B cell (primary cell): ENCODE measurements at regions of chr1 and their contacts with region 1.

Region 1: DNA sequence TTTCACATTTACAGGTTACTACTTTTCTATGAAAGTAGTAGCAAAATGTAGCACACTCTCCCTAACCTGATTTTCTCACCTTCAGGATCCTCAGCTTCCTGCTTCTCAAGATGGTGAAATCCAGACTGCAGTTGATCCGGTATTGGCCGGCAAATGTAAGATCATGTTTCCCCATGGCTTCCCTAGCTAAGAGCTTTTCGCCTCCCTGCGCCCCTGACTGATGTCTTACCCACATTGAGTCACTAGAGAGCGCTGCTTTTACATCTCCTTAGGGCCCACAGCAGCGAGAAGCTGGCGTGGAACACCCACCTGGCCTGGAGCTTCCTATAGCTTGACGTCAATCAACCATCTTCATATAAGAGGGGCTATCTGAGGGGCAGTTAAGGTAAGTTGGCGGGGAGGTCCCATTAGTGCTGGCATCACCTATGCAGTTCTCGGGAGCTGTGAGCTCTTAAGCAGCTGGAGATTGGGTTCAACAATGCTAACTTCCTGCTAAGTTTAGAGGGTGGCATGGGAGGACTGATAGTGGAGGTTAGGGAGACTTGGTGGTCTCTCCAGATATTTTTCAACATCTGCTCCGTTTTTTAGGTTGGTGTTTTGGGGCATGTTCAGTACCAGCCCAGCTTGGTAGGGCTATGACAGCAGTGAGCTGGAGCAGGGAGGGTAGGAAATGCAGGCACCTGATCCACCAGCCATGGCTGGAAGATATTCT is 5.5 kb downstream of the PTPN7 start:
- DNase-seq: peak; percentile 73
- ATAC-seq: peak; percentile 80
- H3K4me3 ChIP-seq: no peak overlapping the region
- H3K4me3 Mint-ChIP-seq: no peak overlapping the region
- H3K27ac ChIP-seq: peak overlapping the region in 1 of 2 donors; percentile 16
- H3K27ac Mint-ChIP-seq: no peak overlapping the region
- H3K4me1 ChIP-seq: peaks cover 15 to 22% of the 10 kb centered on the region in 2 donors
- H3K4me1 Mint-ChIP-seq: peaks cover 36% of the 10 kb centered on the region
- H3K27me3 ChIP-seq: no peaks in the 10 kb centered on the region
- H3K27me3 Mint-ChIP-seq: no peaks in the 10 kb centered on the region
- CTCF ChIP-seq: peak; percentile 76

Region 2: GRCh38 chr1:202135221-202135721 is 19.7 kb before region 1 on chr1:
- CTCF ChIA-PET with region 1: interaction called, 32 read pairs
- POLR2A ChIA-PET with region 1: no interaction called
- intact Hi-C with region 1: no loop called
- DNase-seq: peak; percentile 71
- ATAC-seq: peak; percentile 94
- H3K4me3 ChIP-seq: no peak overlapping the region
- H3K4me3 Mint-ChIP-seq: no peak overlapping the region
- H3K27ac ChIP-seq: no peak overlapping the region
- H3K27ac Mint-ChIP-seq: no peak overlapping the region
- H3K4me1 ChIP-seq: no peaks in the 10 kb centered on the region
- H3K4me1 Mint-ChIP-seq: peaks cover 14% of the 10 kb centered on the region
- H3K27me3 ChIP-seq: no peaks in the 10 kb centered on the region
- H3K27me3 Mint-ChIP-seq: no peaks in the 10 kb centered on the region
- CTCF ChIP-seq: peak; percentile 87

Region 3: GRCh38 chr1:202144402-202145067 is 10.4 kb before region 1 on chr1 and contains the start of gene ARL8A:
- CTCF ChIA-PET with region 1: interaction called, 23 read pairs
- POLR2A ChIA-PET with region 1: interaction called, 4 read pairs
- intact Hi-C with region 1: loop called (anchors 1 kb)
- DNase-seq: peak; percentile 78
- ATAC-seq: peak; percentile 74
- H3K4me3 ChIP-seq: peak within 1 kb of the TSS; percentile 74 to 92 (median 88)
- H3K4me3 Mint-ChIP-seq: peak within 1 kb of the TSS; percentile 93
- H3K27ac ChIP-seq: peak within 1 kb of the TSS; percentile 65 to 90
- H3K27ac Mint-ChIP-seq: peak within 1 kb of the TSS; percentile 95
- H3K4me1 ChIP-seq: peaks cover 30 to 43% of the 10 kb centered on the region in 2 donors
- H3K4me1 Mint-ChIP-seq: peaks cover 47% of the 10 kb centered on the region
- H3K27me3 ChIP-seq: no peaks in the 10 kb centered on the region
- H3K27me3 Mint-ChIP-seq: no peaks in the 10 kb centered on the region
- CTCF ChIP-seq: no peak
- total RNA-seq, gene ARL8A: 66.8 and 70.7 TPM in 2 replicates

Region 4: DNA sequence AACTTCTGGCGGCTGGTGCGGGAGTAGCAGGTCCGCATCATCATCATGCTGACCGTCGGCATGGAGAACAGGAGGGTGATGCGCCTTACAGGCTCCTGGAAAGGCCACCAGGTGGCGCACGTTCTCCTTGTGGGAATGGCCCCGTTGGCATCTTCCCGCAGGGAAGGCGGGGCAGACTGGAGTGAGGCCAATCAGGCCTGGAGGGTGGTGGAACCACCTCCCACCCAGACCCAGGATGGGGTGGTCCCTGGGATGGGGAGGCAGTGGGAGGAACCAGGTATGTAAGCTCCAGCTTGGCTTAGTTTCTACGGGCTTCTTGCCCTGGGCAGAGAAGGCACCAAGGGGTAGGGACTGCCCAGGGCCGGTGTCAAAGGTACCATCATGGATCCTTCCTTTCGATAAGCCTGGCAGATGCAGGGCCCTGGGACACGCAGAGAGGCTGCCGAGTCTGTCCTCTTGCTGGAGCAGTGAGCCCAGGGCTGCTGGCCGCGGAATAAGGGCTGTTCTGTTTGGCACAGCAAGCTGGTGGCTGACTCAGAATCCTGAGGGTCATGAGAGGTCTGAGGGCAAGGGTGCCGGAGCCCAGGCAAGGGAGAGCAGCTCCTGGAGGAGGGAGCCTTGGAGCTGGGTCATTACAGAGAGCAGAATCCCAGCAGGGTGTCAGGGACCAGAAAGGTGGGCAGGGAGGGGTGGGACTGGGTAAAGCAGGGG is 30.0 kb after region 1 on chr1:
- CTCF ChIA-PET with region 1: interaction called, 37 read pairs
- POLR2A ChIA-PET with region 1: no interaction called
- intact Hi-C with region 1: no loop called
- DNase-seq: peak; percentile 71
- ATAC-seq: peak; percentile 50
- H3K4me3 ChIP-seq: no peak overlapping the region
- H3K4me3 Mint-ChIP-seq: no peak overlapping the region
- H3K27ac ChIP-seq: no peak overlapping the region
- H3K27ac Mint-ChIP-seq: no peak overlapping the region
- H3K4me1 ChIP-seq: peaks cover 5 to 6% of the 10 kb centered on the region in 2 donors
- H3K4me1 Mint-ChIP-seq: peaks cover 9% of the 10 kb centered on the region
- H3K27me3 ChIP-seq: peaks cover 0 to 31% (median 5%) of the 10 kb centered on the region in 4 experiments
- H3K27me3 Mint-ChIP-seq: peaks cover 46% of the 10 kb centered on the region
- CTCF ChIP-seq: peak; percentile 78

Region 5: DNA sequence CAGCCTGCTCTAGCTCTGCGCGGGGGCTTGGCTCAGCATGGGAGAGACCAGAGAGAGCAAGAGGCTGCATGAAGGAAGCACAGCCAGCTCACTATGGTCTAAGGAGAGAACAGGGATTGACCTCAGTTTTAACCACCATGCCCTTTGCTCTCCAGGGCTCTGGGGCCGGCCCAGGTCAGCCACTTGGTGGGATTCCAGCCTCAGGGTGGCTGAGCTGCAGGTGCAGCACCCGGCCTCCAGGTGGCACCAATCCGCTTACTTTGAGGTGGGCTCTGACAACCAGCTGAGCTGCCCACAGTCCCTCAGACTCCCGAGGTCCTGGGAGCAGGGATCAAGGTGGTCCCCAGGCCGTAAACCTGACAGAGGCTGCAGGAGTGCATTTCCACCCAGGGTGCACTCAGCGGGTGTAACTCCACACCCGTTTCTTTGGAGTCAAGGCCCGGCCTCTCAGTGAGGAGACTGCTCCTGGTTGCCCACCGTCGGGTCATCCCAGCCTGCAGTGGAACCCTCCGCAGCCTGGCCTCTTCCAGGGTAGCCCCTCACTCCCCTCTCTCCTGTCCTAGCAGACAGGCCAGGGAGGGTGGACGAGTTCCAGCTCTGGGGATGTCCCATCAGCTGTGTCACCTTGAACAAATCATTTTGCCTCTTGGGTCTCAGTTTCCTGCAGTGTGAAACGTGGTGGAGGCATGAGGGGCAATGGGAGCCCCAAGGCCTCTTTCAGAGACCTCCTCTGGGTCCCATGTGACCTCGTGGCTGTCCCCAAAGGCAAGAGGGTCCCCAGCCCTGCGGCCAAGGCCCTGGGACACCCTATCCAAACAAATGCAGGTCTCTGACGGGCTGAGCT is 38.1 kb after region 1 on chr1:
- CTCF ChIA-PET with region 1: interaction called, 24 read pairs
- POLR2A ChIA-PET with region 1: no interaction called
- intact Hi-C with region 1: no loop called
- DNase-seq: peak; percentile 75
- ATAC-seq: peak; percentile 71
- H3K4me3 ChIP-seq: no peak overlapping the region
- H3K4me3 Mint-ChIP-seq: peak overlapping the region; percentile 58
- H3K27ac ChIP-seq: no peak overlapping the region
- H3K27ac Mint-ChIP-seq: no peak overlapping the region
- H3K4me1 ChIP-seq: peaks cover 14 to 19% of the 10 kb centered on the region in 2 donors
- H3K4me1 Mint-ChIP-seq: peaks cover 18% of the 10 kb centered on the region
- H3K27me3 ChIP-seq: peaks cover 0 to 36% (median 10%) of the 10 kb centered on the region in 4 experiments
- H3K27me3 Mint-ChIP-seq: peaks cover 54% of the 10 kb centered on the region
- CTCF ChIP-seq: peak; percentile 89

Region 6: GRCh38 chr1:202315576-202316168 is 160.8 kb after region 1 on chr1:
- CTCF ChIA-PET with region 1: interaction called, 37 read pairs
- POLR2A ChIA-PET with region 1: no interaction called
- intact Hi-C with region 1: loop called (anchors 1 kb)
- DNase-seq: peak; percentile 72
- ATAC-seq: peak; percentile 86
- H3K4me3 ChIP-seq: no peak overlapping the region
- H3K4me3 Mint-ChIP-seq: no peak overlapping the region
- H3K27ac ChIP-seq: no peak overlapping the region
- H3K27ac Mint-ChIP-seq: no peak overlapping the region
- H3K4me1 ChIP-seq: no peaks in the 10 kb centered on the region
- H3K4me1 Mint-ChIP-seq: no peaks in the 10 kb centered on the region
- H3K27me3 ChIP-seq: peaks cover 0 to 9% (median 4%) of the 10 kb centered on the region in 4 experiments
- H3K27me3 Mint-ChIP-seq: peaks cover 13% of the 10 kb centered on the region
- CTCF ChIP-seq: peak; percentile 93

Region 7: DNA sequence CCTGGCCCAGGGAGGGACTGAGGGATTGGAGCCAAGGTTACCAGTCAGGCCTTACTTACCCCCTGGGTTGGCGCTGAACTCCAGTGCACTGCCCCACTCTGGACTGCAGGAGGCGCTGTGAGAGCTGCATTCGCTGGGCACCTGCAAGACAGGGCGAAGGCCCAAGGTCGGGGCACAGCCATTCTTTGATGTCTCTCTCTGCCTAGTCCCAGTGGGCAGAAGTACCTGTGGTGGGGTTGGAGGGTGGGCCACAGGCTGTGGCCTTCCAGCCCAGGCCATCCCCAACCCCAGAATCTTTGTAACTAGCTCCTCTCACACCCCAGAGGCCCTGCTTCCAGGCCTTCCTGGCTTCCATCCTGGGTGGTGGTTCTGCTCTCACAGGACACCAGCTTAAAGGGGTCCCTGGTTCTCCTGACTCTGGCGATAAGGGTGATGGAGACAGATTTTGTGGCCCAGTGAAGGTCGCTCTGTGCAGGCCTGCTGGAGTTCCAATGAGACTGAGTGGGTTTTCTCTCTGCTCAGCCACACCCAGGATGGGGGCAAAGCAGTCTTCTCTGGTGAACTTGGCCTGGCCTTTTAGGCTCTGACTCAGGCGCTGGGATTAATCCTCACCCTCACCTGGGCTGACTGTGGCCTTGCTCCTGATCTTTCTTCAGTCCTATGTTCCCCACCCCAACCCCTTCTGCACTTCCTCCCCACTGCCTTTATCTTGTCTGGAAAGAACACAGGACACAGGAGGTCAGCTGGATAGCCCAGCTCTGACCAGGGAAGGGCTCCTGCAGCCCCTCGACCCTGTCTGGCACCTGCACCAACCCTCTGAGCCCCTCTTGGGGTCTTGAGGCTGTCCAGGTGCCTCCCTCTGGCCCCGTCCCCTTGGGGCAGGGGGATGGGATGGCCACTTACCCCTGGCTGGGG is 929.9 kb after region 1 on chr1:
- CTCF ChIA-PET with region 1: no interaction called
- POLR2A ChIA-PET with region 1: no interaction called
- intact Hi-C with region 1: no loop called
- DNase-seq: peak; percentile 14
- ATAC-seq: no peak
- H3K4me3 ChIP-seq: no peak overlapping the region
- H3K4me3 Mint-ChIP-seq: no peak overlapping the region
- H3K27ac ChIP-seq: no peak overlapping the region
- H3K27ac Mint-ChIP-seq: no peak overlapping the region
- H3K4me1 ChIP-seq: no peaks in the 10 kb centered on the region
- H3K4me1 Mint-ChIP-seq: no peaks in the 10 kb centered on the region
- H3K27me3 ChIP-seq: peaks cover 0 to 2% (median 0%) of the 10 kb centered on the region in 4 experiments
- H3K27me3 Mint-ChIP-seq: peaks cover 29% of the 10 kb centered on the region
- CTCF ChIP-seq: peak; percentile 13

Region 8: GRCh38 chr1:203395751-203396150 is 1240.8 kb after region 1 on chr1:
- CTCF ChIA-PET with region 1: no interaction called
- POLR2A ChIA-PET with region 1: no interaction called
- intact Hi-C with region 1: no loop called
- DNase-seq: no peak
- ATAC-seq: no peak
- H3K4me3 ChIP-seq: no peak overlapping the region
- H3K4me3 Mint-ChIP-seq: no peak overlapping the region
- H3K27ac ChIP-seq: no peak overlapping the region
- H3K27ac Mint-ChIP-seq: no peak overlapping the region
- H3K4me1 ChIP-seq: no peaks in the 10 kb centered on the region
- H3K4me1 Mint-ChIP-seq: no peaks in the 10 kb centered on the region
- H3K27me3 ChIP-seq: no peaks in the 10 kb centered on the region
- H3K27me3 Mint-ChIP-seq: peaks cover 31% of the 10 kb centered on the region
- CTCF ChIP-seq: no peak